Mammary epithelial cell (primary cell): ENCODE measurements at regions of chr1 and their contacts with region 1.

Region 1: DNA sequence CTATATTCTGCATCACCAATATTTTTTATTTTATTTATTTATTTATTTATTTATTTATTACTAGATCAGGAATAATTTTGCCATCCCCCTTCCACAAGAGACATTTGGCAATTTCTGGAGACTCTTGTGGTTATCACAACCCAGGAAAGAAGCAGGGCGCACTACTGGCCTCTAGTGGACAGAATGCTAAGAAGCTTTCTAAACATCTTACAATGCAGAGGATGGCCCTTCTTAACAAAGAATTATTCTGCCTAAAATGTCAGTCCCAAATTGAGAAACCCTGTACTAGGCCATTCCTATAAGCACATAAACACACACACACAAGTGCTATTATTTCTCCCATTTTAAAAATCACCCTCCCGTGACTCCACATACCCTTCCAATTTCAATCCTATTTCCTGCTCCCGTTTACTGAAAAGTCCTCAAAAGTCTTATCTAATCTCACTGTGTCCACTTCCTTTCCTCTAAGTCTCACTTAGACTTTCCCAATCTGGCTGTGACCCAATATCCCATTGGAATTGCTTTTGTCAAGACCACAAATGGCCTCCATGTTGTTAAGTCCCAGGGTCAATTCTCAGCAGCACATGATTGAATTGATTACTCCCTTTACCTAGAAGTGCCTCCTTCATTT is 43.7 kb upstream of the RNF11 start:
- DNase-seq: peak; percentile 42
- H3K4me3 ChIP-seq: no peak overlapping the region
- H3K27ac ChIP-seq: no peak overlapping the region
- H3K4me1 ChIP-seq: no peaks in the 10 kb centered on the region
- H3K27me3 ChIP-seq: no peaks in the 10 kb centered on the region
- CTCF ChIP-seq: peak; percentile 87 to 90

Region 2: DNA sequence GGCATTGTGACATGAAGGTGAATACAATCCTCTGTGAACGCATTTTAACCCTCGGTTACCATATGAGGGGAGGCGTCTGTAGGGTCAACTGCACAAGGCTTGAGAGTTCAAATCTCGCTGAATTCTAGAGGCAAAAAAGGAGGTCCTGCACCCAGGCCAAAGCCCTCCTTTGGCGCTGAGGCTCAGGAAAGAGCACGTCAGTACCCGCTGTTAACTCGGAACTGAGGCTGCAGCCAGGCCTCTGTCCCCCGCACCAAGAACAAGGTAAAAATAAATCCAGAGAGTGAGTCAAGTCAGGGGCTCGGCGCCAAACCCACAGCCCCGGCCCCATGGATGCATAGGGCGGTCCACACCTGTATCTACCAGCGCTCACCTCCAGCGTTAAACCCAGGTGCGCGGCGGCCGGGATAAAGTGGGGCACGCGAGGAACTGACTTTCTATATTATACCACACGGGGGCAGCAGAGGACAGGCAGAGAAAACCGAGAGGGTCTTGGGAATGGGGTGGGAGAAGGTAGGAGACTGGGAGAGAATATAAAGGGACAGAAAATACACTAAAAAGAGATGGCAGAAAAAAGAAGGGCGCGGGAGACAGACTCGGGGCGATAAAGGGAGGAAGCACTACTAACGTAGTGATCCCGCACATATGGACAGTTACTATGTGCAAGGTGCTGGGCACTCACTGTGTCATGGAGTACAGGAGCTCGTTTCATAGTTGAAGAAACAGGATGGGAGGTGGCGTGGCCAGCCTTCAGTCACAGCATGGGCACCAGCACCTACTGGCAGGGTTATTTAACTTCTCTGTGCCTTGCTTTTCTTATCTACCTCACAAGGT is 823.9 kb before region 1 on chr1:
- CTCF ChIA-PET with region 1: no interaction called
- dilution Hi-C with region 1: no loop called
- in situ Hi-C with region 1: loop called in 1 of 2 experiments (anchors 25 kb)
- intact Hi-C with region 1: loop called (anchors 1 kb)
- DNase-seq: peak; percentile 21
- H3K4me3 ChIP-seq: peak overlapping the region in 1 of 3 experiments; percentile 26
- H3K27ac ChIP-seq: no peak overlapping the region
- H3K4me1 ChIP-seq: no peaks in the 10 kb centered on the region
- H3K27me3 ChIP-seq: no peaks in the 10 kb centered on the region
- CTCF ChIP-seq: peak; percentile 46 to 72

Region 3: GRCh38 chr1:50666849-50667248 is 525.5 kb before region 1 on chr1:
- CTCF ChIA-PET with region 1: no interaction called
- dilution Hi-C with region 1: no loop called
- in situ Hi-C with region 1: no loop called
- intact Hi-C with region 1: no loop called
- DNase-seq: no peak
- H3K4me3 ChIP-seq: no peak overlapping the region
- H3K27ac ChIP-seq: no peak overlapping the region
- H3K4me1 ChIP-seq: no peaks in the 10 kb centered on the region
- H3K27me3 ChIP-seq: no peaks in the 10 kb centered on the region
- CTCF ChIP-seq: no peak

Region 4: DNA sequence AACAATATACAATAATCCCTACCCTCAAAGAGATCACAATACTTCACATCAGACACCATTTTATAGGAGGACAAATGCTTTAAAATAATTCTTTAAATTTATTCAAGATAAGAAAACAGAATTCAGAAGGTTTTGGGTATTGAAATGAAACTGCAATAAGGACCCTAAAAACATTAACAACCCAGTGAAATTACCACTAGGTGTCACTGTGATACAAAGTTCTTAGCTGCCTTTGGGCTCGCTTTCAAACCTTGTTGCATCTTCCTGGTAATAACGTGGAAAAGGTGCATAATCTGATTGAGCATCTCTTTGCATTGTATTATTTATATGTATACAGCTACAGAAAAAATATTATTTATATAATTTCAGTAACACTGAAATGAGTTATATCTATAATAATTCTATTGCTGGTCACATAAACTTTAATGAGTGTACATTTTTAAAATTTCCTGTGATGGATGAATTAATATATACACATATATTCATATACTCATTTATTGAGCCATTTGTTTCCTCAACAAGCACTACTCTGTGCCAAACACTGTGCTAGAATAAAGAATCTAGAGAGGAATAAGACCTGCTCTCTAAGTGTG is 417.5 kb before region 1 on chr1:
- CTCF ChIA-PET with region 1: interaction called, 3 read pairs
- dilution Hi-C with region 1: no loop called
- in situ Hi-C with region 1: loop called in 1 of 2 experiments (anchors 25 kb)
- intact Hi-C with region 1: loop called (anchors 1 kb)
- DNase-seq: peak; percentile 42
- H3K4me3 ChIP-seq: no peak overlapping the region
- H3K27ac ChIP-seq: no peak overlapping the region
- H3K4me1 ChIP-seq: no peaks in the 10 kb centered on the region
- H3K27me3 ChIP-seq: no peaks in the 10 kb centered on the region
- CTCF ChIP-seq: peak; percentile 60 to 73

Region 5: GRCh38 chr1:50929376-50929958 is 262.9 kb before region 1 on chr1:
- CTCF ChIA-PET with region 1: interaction called, 5 read pairs
- dilution Hi-C with region 1: no loop called
- in situ Hi-C with region 1: loop called in 1 of 2 experiments (anchors 25 kb)
- intact Hi-C with region 1: loop called (anchors 1 kb)
- DNase-seq: peak; percentile 12
- H3K4me3 ChIP-seq: no peak overlapping the region
- H3K27ac ChIP-seq: no peak overlapping the region
- H3K4me1 ChIP-seq: no peaks in the 10 kb centered on the region
- H3K27me3 ChIP-seq: no peaks in the 10 kb centered on the region
- CTCF ChIP-seq: peak; percentile 49 to 54

Region 6: GRCh38 chr1:51088488-51088887 is 103.8 kb before region 1 on chr1:
- CTCF ChIA-PET with region 1: interaction called, 8 read pairs
- dilution Hi-C with region 1: no loop called
- in situ Hi-C with region 1: loop called in 1 of 2 experiments (anchors 5 kb)
- intact Hi-C with region 1: loop called (anchors 1 kb)
- DNase-seq: no peak
- H3K4me3 ChIP-seq: no peak overlapping the region
- H3K27ac ChIP-seq: no peak overlapping the region
- H3K4me1 ChIP-seq: peaks cover 4% of the 10 kb centered on the region
- H3K27me3 ChIP-seq: no peaks in the 10 kb centered on the region
- CTCF ChIP-seq: peak; percentile 30 to 69

Region 7: GRCh38 chr1:51296383-51297357 is 104.3 kb after region 1 on chr1:
- CTCF ChIA-PET with region 1: no interaction called
- dilution Hi-C with region 1: no loop called
- in situ Hi-C with region 1: no loop called
- intact Hi-C with region 1: loop called (anchors 1 kb)
- DNase-seq: peak; percentile 62
- H3K4me3 ChIP-seq: peak overlapping the region in 1 of 3 experiments; percentile 28
- H3K27ac ChIP-seq: no peak overlapping the region
- H3K4me1 ChIP-seq: peaks cover 7% of the 10 kb centered on the region
- H3K27me3 ChIP-seq: no peaks in the 10 kb centered on the region
- CTCF ChIP-seq: peak; percentile 89 to 98

Region 8: DNA sequence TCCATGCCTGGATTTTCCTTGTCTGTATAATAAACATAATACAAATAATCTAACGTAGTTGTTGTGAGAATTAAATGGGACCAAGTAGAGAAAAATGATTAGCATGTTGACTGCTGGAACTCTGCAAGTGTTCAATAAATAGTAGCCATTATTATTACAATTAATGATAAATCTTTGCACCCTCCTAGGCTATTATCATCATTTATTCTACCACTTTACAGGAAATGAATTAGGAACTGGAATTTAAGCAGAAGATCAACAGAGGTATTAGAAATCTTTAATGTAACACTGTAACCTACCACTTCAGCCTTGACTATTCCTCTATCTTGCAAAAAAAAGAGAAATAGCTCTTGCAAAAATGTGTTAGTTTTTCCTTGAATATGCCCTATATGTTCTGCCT is 199.9 kb after region 1 on chr1:
- CTCF ChIA-PET with region 1: no interaction called
- dilution Hi-C with region 1: no loop called
- in situ Hi-C with region 1: no loop called
- intact Hi-C with region 1: no loop called
- DNase-seq: no peak
- H3K4me3 ChIP-seq: no peak overlapping the region
- H3K27ac ChIP-seq: no peak overlapping the region
- H3K4me1 ChIP-seq: no peaks in the 10 kb centered on the region
- H3K27me3 ChIP-seq: no peaks in the 10 kb centered on the region
- CTCF ChIP-seq: no peak

Region 9: DNA sequence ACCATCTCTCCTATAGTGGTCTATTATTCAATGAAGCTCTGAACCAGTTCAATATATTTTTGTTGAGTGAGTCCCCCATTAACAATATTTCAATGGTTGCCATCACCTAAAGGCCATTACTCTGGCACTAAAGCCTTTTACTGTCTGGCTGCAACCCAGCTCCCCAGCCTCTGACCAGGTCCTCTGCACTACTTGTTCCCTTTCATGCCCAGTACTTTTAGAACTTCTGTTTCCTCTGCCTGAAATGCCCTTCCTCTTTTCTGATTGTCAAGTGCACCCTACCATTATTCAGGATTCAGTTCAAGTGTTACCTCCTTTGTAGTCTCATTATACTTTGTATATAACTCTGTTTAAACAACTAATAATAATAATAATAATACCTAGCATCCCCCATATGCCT is 919.2 kb after region 1 on chr1:
- CTCF ChIA-PET with region 1: no interaction called
- dilution Hi-C with region 1: no loop called
- in situ Hi-C with region 1: no loop called
- intact Hi-C with region 1: no loop called
- DNase-seq: no peak
- H3K4me3 ChIP-seq: no peak overlapping the region
- H3K27ac ChIP-seq: no peak overlapping the region
- H3K4me1 ChIP-seq: no peaks in the 10 kb centered on the region
- H3K27me3 ChIP-seq: no peaks in the 10 kb centered on the region
- CTCF ChIP-seq: no peak